Heart right ventricle (tissue), 16 donors: ENCODE measurements at regions of chr12 and their contacts with region 1.

Region 1: DNA sequence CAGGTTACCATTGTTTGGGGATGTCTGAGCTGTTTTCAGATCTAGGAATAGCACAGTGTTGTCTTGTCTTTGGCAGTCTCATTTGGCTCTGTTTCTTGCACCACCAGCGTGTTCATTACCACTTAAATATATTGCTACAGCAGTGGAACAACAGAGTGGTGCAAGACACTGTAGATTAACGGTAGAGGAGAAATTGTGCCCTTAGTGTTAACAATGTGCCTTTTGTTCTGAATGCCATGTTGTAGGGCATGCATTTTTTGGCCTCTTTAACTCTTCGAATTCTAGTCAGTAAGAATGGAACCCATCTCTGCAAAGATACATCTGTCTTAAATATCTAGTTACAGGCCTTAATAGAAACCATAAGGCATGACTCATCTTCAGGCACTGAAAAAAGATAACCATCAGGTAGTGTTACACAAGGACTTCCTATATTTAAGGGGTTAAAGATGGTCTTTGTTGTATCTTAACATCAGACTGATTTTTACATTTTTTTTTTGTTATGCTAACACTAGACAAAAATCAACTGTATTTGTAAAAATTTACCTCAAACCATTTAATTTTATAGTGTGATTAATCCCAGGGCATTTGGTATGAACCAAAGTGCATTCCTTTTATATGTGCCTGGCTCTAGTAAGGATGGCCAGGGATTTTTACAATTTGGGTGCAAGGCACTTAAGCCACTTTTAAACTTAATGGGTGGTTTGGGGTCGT is 12.9 kb downstream of the DYRK2 start:
- DNase-seq: no peak
- ATAC-seq: peak in 5 of 8 donors; percentile 28 to 50 (median 37)
- H3K4me3 ChIP-seq: no peak overlapping the region
- H3K27ac ChIP-seq: peak overlapping the region in 4 of 10 donors; percentile 5 to 64 (median 44)
- H3K4me1 ChIP-seq: peaks cover 6 to 100% (median 82%) of the 10 kb centered on the region in 9 donors
- H3K27me3 ChIP-seq: no peaks in the 10 kb centered on the region
- CTCF ChIP-seq: no peak

Region 2: GRCh38 chr12:67515679-67516340 is 145.7 kb before region 1 on chr12:
- intact Hi-C with region 1: no loop called
- DNase-seq: peak in 1 of 2 donors; percentile 21
- ATAC-seq: peak in 5 of 8 donors; percentile 25 to 82 (median 64)
- H3K4me3 ChIP-seq: no peak overlapping the region
- H3K27ac ChIP-seq: peak overlapping the region in 1 of 10 donors; percentile 13
- H3K4me1 ChIP-seq: peaks cover 0 to 19% (median 0%) of the 10 kb centered on the region in 9 donors
- H3K27me3 ChIP-seq: no peaks in the 10 kb centered on the region
- CTCF ChIP-seq: no peak

Region 3: DNA sequence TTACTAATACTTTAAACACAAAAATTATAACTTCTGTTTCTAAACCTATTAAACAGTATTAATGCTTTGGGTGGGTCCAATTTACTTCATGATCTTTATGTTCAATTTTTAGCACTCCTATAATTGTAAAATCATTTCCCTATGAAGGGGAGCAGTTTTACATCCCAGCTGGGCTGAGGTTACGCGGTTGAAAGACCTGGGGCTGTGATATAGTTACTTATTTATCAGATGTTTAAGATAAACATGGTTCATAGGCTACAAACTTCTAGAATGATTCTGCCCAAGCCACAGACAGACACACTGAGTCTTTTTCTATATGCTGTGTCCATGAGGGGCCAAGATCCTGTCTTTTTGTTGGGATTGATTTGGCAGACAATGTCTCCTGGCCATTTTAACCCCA is 31.5 kb after region 1 on chr12:
- intact Hi-C with region 1: no loop called
- DNase-seq: no peak
- ATAC-seq: no peak
- H3K4me3 ChIP-seq: no peak overlapping the region
- H3K27ac ChIP-seq: no peak overlapping the region
- H3K4me1 ChIP-seq: peaks cover 0 to 17% (median 9%) of the 10 kb centered on the region in 9 donors
- H3K27me3 ChIP-seq: no peaks in the 10 kb centered on the region
- CTCF ChIP-seq: no peak

Region 4: GRCh38 chr12:67710582-67710981 is 49.1 kb after region 1 on chr12:
- intact Hi-C with region 1: loop called in 3 of 10 experiments (anchors 10 kb)
- DNase-seq: peak in 1 of 2 donors; percentile 16
- ATAC-seq: peak in 5 of 8 donors; percentile 19 to 79 (median 48)
- H3K4me3 ChIP-seq: no peak overlapping the region
- H3K27ac ChIP-seq: peak overlapping the region in 6 of 10 donors; percentile 31 to 79 (median 68)
- H3K4me1 ChIP-seq: peaks cover 1 to 23% (median 10%) of the 10 kb centered on the region in 9 donors
- H3K27me3 ChIP-seq: no peaks in the 10 kb centered on the region
- CTCF ChIP-seq: no peak

Region 5: GRCh38 chr12:67765776-67766767 is 104.6 kb after region 1 on chr12:
- intact Hi-C with region 1: loop called in 1 of 10 experiments (anchors 10 kb)
- DNase-seq: no peak
- ATAC-seq: peak in 1 of 8 donors; percentile 13
- H3K4me3 ChIP-seq: no peak overlapping the region
- H3K27ac ChIP-seq: no peak overlapping the region
- H3K4me1 ChIP-seq: peaks cover 0 to 11% (median 0%) of the 10 kb centered on the region in 9 donors
- H3K27me3 ChIP-seq: no peaks in the 10 kb centered on the region
- CTCF ChIP-seq: no peak